GM10248 (cell line): ENCODE measurements at regions of chr3 and their contacts with region 1.

Region 1: GRCh38 chr3:86967062-86967461 is 23.9 kb downstream of the VGLL3 start:
- DNase-seq: no peak
- CTCF ChIP-seq: no peak

Region 2: GRCh38 chr3:86937305-86937791 is 29.7 kb before region 1 on chr3:
- CTCF ChIA-PET with region 1: no interaction called
- POLR2A ChIA-PET with region 1: no interaction called
- DNase-seq: no peak
- CTCF ChIP-seq: no peak

Region 3: GRCh38 chr3:87082796-87083440 is 115.9 kb after region 1 on chr3:
- CTCF ChIA-PET with region 1: interaction called, 14 read pairs
- POLR2A ChIA-PET with region 1: no interaction called
- DNase-seq: peak; percentile 40
- CTCF ChIP-seq: peak; percentile 43

Region 4: DNA sequence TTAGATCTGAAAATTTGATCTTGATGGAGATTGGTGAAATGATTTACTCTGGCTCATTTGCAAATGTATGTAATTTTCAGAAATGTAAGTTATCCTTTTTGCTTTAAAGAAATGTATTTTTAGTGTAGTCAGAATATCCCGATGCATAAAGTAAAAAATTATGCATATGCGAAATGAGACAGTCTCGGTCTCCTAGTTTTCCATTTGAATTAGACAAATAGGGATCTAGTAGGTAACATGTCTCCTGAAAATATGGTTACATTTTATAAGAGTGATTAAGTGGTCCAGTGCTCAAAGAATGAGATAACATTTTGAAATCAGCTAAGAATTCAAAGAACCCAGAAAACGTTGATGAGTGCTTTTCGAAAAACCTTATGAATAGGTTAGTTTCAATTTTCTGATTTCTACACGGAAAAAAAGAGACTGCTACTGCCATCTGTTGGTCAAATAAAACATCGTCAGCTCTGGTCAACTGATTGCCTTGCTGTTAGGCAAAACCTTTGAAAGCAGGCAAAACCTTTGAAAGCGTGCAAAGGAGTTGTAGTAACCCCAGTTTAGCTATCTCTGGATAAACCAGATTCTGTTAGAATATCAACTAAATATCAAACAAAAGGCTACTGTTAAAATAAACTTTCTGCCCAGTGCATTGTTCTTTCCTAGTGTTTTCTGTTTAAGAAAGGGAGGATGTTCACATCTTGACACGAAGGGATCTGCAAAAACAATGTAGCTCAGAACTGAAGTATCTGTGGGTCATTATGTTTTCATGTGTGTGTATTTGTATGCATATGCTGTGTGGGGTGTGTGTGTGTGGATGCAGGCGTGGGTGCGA is 200.8 kb after region 1 on chr3:
- CTCF ChIA-PET with region 1: interaction called, 12 read pairs
- POLR2A ChIA-PET with region 1: no interaction called
- DNase-seq: peak; percentile 14
- CTCF ChIP-seq: peak; percentile 60